Activated naive CD4-positive, alpha-beta T cell treated with anti-CD3 and anti-CD28 coated beads, Interleukin-2, amount 10 ng/mL, durations not matched to agents 7 days and 5 days (primary cell): ENCODE measurements at regions of chr12 and their contacts with region 1.

Region 1: GRCh38 chr12:10722905-10723866 is at the start of gene YBX3:
- DNase-seq: peak; percentile 61
- H3K4me3 Mint-ChIP-seq: peak within 1 kb of the TSS; percentile 84
- H3K27ac Mint-ChIP-seq: peak within 1 kb of the TSS; percentile 69
- H3K4me1 Mint-ChIP-seq: peaks cover 36% of the 10 kb centered on the region
- H3K27me3 Mint-ChIP-seq: peaks cover 56% of the 10 kb centered on the region

Region 2: GRCh38 chr12:10341892-10342509 is 381.2 kb before region 1 on chr12:
- CTCF ChIA-PET with region 1: no interaction called
- DNase-seq: no peak
- H3K4me3 Mint-ChIP-seq: no peak overlapping the region
- H3K27ac Mint-ChIP-seq: no peak overlapping the region
- H3K4me1 Mint-ChIP-seq: peaks cover 7% of the 10 kb centered on the region
- H3K27me3 Mint-ChIP-seq: peaks cover 7% of the 10 kb centered on the region

Region 3: DNA sequence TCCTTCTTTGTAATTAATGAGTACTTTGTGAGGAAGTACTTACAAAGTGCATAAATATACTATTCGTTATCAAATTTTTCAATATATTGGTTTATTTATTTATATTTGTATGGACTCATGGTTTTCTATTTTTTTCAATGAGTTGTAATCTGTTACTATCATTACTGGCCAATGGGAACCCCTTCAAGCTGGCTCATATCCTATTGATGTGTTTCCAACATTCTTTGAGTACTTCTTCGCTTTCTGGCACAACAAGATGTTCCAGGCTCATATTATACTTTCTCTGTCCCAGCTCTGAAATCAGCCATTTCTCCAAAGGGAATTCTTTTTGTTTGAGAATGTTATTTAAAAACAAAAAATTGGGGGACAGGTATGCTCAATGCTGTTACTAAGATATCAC is 17.5 kb before region 1 on chr12:
- CTCF ChIA-PET with region 1: no interaction called
- DNase-seq: no peak
- H3K4me3 Mint-ChIP-seq: no peak overlapping the region
- H3K27ac Mint-ChIP-seq: no peak overlapping the region
- H3K4me1 Mint-ChIP-seq: peaks cover 13% of the 10 kb centered on the region
- H3K27me3 Mint-ChIP-seq: no peaks in the 10 kb centered on the region

Region 4: GRCh38 chr12:10749700-10750384 is 26.7 kb after region 1 on chr12:
- CTCF ChIA-PET with region 1: interaction called, 14 read pairs
- DNase-seq: peak; percentile 76
- H3K4me3 Mint-ChIP-seq: no peak overlapping the region
- H3K27ac Mint-ChIP-seq: no peak overlapping the region
- H3K4me1 Mint-ChIP-seq: peaks cover 15% of the 10 kb centered on the region
- H3K27me3 Mint-ChIP-seq: peaks cover 33% of the 10 kb centered on the region

Region 5: DNA sequence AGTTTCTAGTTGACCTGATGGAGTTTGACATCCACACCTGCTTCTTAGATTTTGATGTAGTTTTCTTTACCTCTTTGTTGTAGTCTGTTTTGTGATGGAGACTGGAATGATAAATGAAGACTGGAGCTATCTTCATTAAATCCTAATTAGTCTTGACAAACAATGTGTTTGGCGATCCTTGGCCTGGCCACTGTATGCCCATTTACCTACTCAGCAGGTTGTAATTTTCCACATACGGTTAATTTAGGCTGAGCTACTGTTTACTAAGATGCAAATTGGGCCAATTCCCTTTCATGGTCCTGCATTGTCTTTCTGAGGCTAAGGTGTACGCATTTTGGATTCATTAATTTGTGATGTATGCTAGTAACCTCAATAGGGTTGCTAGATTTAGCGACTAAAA is 79.4 kb after region 1 on chr12 and contains the start of gene TAS2R7:
- CTCF ChIA-PET with region 1: no interaction called
- DNase-seq: no peak
- H3K4me3 Mint-ChIP-seq: no peak within 1 kb of the TSS
- H3K27ac Mint-ChIP-seq: no peak within 1 kb of the TSS
- H3K4me1 Mint-ChIP-seq: no peaks in the 10 kb centered on the region
- H3K27me3 Mint-ChIP-seq: peaks cover 7% of the 10 kb centered on the region